Right cardiac atrium (tissue), 5 donors: ENCODE measurements at regions of chr1 and their contacts with region 1.

Region 1: DNA sequence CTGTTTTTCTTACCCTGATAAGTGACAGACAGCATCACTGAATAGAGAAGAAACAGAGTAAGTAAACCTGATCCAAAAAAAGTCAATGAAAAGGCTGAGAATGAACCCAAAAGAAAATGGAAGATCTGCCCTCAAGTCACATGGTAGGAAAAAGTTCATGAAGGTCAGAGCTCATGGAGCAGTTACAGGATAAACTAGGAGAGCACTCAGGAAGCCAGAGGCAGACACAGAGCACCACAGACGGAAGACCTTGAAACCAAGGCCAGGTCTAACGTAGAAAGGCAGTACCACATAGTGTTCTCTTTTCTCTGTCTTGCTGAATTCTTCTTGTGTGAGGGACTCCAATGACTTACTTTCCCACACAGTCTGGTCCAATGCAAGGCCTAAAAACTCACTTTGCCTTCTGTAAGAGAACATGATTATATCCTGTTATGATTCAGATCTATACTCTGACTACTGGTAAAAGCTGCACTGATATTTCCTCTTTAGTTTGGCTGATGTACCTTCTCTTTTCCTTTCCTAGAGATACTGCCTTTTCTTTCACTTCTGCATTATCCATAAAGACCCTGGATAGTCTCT is 40.8 kb downstream of the RTCA start:
- DNase-seq: no peak
- ATAC-seq: no peak
- H3K4me3 ChIP-seq: no peak overlapping the region
- H3K27ac ChIP-seq: no peak overlapping the region
- H3K4me1 ChIP-seq: no peaks in the 10 kb centered on the region
- H3K27me3 ChIP-seq: no peaks in the 10 kb centered on the region

Region 2: DNA sequence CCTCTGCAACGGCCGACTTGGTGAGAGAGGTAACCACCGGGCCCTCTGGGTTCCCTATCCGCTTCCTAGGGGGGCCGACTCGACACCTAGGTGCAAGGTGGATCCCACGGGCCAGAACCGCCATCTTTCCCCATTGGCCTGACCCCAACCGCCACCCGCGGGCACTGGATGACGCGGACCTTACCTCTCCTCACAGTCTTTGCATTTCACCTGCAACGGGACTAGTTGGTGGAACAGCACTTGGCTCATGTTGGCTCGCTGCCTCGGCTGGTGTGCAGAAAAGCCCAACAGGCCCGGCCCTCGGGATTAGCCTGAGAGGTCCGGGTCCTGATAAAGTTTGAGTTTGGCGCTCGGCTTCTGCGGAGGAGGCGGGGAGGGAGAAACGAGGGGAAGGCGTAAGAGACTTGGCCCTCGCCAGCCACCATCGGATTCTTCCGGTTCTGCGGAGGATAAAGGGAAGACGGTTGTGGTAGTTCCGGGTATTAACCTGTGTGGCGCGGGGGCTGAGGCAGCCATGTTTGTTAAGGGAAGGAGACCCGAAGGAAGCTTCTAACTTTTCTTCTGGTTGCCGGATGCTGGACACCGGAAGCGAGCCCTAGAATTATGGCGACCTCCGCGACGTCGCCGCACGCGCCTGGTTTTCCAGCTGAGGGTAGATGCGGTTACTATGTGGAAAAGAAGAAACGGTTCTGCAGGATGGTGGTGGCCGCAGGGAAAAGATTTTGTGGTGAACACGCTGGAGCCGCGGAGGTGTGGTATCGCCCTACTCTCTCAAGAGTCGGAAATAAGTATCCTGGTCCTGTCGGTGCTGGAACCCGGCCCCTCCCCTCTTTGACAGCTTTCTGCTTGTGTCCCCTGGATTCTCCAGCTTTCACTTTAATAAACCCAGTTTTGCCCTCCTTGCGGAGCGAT is 174.0 kb before region 1 on chr1 and contains the starts of genes SASS6 and TRMT13:
- intact Hi-C with region 1: no loop called
- DNase-seq: peak; percentile 97 to 98 (median 98)
- ATAC-seq: peak; percentile 99 to 100
- H3K4me3 ChIP-seq: peak within 1 kb of the TSS; percentile 93
- H3K27ac ChIP-seq: peak within 1 kb of the TSS; percentile 21
- H3K4me1 ChIP-seq: peaks cover 2% of the 10 kb centered on the region
- H3K27me3 ChIP-seq: no peaks in the 10 kb centered on the region
- total RNA-seq, gene SASS6: 1.6 to 2.4 (median 2.3) TPM
- total RNA-seq, gene TRMT13: 5.7 to 8.4 (median 7.5) TPM

Region 3: DNA sequence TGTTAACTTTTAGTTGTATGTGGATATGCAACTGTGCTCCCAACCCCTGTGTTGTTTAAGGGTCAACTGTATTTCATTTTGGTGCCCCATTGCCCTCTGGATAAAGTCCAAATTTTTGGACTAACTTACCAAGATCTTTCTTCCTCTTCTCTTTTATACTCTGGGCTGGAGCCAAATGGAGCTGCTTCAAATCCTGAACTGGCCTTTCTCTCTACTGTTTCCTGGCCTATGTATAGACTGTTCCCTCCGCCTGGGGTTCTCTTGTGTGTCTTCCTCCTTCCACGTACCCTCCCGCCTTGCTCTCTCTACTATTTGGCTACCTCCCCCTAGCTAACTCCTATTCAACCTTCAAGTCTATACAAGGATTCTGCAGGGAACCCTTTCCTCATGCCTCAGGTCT is 37.1 kb after region 1 on chr1:
- intact Hi-C with region 1: loop called in 1 of 4 experiments (anchors 2 kb)
- DNase-seq: no peak
- ATAC-seq: peak in 1 of 2 donors; percentile 51
- H3K4me3 ChIP-seq: no peak overlapping the region
- H3K27ac ChIP-seq: no peak overlapping the region
- H3K4me1 ChIP-seq: no peaks in the 10 kb centered on the region
- H3K27me3 ChIP-seq: no peaks in the 10 kb centered on the region